A549 (cell line): ENCODE measurements at regions of chr5 and their contacts with region 1.

Region 1: DNA sequence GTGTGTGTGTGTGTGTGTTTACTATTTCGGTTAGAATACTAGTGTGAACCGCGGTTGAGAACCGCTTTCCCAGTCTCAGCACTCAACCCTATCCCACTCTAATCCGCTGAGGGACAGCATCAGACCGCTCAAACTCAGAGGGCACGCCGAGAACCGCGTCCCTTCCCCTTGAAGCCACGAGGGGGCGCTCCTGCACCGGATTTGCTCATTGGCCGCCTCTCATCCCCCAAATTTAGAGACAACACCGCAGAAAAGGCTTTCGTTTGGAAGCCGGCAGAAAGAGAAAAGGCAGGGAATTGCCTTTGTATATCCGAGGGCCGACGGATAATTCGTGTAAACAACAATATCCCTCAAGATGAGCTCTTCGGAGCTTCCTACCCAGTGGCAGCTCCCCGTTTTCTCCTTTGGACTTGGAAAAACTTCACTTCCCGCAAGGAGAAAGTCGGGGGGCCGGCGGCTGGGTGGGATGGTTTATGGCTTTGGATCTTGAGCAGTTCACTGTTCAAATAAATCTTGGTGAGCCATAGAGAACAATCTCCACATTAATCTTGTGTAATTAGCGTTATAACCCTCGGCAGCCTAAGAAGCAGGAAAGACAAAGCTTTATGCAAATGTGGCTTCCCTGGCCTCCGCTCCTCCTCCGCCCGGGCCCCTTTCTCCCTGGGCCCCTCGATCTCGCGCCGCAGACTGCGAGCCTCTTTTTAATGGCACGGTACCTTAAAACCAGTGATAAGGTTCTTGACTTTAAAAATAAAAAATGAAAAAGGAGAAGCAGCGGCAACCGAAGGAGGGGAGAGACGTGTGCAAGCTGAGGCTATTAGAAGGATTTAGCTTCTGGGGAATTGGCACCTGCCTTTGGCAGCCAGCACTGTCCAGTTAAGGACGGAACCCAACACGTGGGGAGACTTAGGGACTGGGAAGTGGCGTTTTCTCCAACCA is 296.8 kb downstream of the PARP8 start:
- DNase-seq: peak; percentile 55 to 65
- ATAC-seq: peak; percentile 92 to 96
- H3K4me3 ChIP-seq: peak overlapping the region; percentile 39; the same call in 2 of the 3 replicates
- H3K27ac ChIP-seq: no peak overlapping the region
- H3K4me1 ChIP-seq: no peaks in the 10 kb centered on the region
- CTCF ChIP-seq: peak; percentile 81
- EP300 ChIP-seq: no peak
- POLR2A ChIP-seq: no peak
- RAD21 ChIP-seq: peak; percentile 86 to 87

Region 2: DNA sequence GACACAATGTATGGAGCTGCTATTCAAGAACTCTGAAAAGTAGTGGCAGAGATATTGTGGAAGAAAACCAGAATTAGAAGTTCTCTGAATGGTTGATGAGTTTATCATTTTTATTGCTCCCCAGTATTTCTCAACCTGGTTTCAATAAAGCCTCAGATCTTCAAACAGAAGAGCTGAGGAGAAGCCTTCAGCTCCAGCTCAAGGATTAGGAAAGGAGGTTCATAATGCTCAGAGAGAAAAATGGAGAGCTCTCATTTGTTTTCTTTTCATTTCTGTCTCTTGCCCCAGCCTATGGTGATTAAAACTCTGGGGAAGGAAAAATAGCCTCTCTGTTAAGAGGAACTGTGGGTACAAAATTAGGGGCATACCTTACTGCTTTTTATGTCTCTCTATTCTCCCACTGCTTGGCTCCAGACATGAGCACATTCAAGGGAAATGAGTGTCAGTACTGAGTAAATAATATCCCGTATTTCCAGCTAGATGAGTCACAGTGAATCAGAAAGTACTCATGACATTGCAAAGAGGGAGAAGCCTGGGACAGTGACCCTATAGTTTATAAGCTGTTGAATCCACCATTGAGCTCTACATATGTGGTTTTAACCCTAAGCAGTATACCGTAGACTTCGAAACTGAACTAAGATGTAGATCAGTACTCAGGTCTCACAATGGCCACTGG is 660.2 kb before region 1 on chr5:
- CTCF ChIA-PET with region 1: no interaction called
- POLR2A ChIA-PET with region 1: no interaction called
- DNase-seq: peak; percentile 15 to 74
- ATAC-seq: peak; percentile 97 to 99
- H3K4me3 ChIP-seq: no peak overlapping the region
- H3K27ac ChIP-seq: peak overlapping the region; percentile 62 to 73
- H3K4me1 ChIP-seq: peaks cover 23% of the 10 kb centered on the region
- CTCF ChIP-seq: no peak
- EP300 ChIP-seq: no peak
- POLR2A ChIP-seq: no peak
- RAD21 ChIP-seq: no peak

Region 3: DNA sequence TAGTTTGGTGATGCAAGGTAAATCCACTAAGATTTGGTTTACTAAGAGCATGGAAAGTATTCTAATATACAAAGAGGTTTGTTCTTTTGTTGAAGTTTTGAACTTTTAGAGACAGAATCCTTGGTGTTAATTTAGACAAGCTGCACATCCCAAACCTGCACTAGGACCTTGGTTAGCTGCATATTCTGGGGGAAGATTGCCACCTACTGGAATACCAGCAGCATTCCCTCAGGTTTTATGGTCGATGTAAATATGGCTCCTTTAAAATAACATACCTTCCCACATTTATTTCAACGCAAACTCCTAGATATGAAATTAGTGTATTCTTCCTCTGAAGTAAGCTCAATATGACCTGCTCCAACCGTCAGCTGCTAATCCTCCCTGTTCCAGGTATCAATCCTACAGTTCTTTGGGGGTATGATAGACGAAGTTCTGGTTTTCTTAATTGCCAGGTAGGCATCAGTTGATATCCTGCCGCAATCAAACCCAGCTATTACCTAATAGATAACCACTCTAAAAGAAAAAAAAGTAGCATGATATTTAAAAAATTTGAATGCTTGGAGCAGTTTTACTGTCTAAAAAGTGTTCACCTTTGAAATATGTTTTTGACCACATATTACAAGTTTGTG is 1044.1 kb after region 1 on chr5:
- CTCF ChIA-PET with region 1: interaction called, 12 read pairs
- POLR2A ChIA-PET with region 1: no interaction called
- DNase-seq: peak; percentile 1 to 53
- ATAC-seq: peak; percentile 54 to 76; a peak in 3 of 6 replicates
- H3K4me3 ChIP-seq: no peak overlapping the region
- H3K27ac ChIP-seq: no peak overlapping the region
- H3K4me1 ChIP-seq: no peaks in the 10 kb centered on the region
- CTCF ChIP-seq: peak; percentile 57
- EP300 ChIP-seq: no peak
- POLR2A ChIP-seq: no peak
- RAD21 ChIP-seq: peak; percentile 66 to 71

Region 4: DNA sequence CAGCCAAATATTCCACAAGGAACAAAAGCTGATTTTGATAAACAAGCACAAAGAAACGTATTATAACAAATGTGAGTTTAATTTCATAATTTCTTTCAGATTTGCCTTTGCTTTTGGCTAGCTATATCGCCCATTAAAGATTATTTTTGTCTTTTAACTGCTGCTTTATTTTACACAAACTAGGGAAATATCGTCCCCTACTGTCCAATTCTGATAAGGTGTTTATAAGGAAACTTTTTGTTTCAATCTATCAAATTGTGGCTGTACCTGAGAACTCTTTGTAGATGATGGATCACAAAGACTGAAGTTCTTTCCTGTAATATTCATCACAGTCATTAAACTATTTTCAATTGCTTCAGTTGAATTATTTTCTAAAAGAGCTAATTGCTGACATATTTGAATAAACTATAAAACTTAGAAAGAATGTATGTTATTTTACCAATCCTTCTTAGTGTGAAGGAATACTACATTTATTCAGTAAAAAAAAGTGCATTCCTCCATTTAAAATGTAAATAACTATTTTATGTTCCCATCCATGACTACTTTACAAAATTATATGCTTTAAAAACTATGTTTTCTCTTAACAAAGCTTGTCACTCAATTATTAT is 1393.2 kb after region 1 on chr5:
- CTCF ChIA-PET with region 1: interaction called, 13 read pairs
- POLR2A ChIA-PET with region 1: no interaction called
- DNase-seq: peak in 1 of 2 experiments; percentile 12
- ATAC-seq: no peak
- H3K4me3 ChIP-seq: no peak overlapping the region
- H3K27ac ChIP-seq: no peak overlapping the region
- H3K4me1 ChIP-seq: no peaks in the 10 kb centered on the region
- CTCF ChIP-seq: peak; percentile 50
- EP300 ChIP-seq: no peak
- POLR2A ChIP-seq: no peak
- RAD21 ChIP-seq: peak; percentile 53; a peak in 4 of 5 replicates

Region 5: DNA sequence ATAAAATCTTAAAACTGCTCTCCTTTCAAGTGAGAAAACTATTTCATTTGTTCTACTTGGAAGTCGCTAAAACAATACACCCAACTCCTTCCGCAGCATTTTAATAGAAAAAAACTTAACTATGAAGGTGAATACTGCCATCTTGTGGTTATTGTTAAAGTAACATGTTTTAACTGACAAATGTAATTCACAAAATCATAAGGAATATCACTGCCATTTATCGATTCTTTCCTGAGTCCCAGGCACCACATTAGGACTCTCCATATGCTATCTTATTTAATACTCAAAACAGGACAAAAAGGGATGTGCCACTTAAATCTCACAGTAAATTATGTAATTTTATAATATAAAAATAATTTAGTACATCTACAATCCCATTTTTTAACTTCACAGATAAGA is 1694.0 kb after region 1 on chr5:
- CTCF ChIA-PET with region 1: interaction called, 22 read pairs
- POLR2A ChIA-PET with region 1: no interaction called
- DNase-seq: peak; percentile 8 to 48
- ATAC-seq: no peak
- H3K4me3 ChIP-seq: no peak overlapping the region
- H3K27ac ChIP-seq: no peak overlapping the region
- H3K4me1 ChIP-seq: no peaks in the 10 kb centered on the region
- CTCF ChIP-seq: peak; percentile 60
- EP300 ChIP-seq: no peak
- POLR2A ChIP-seq: no peak
- RAD21 ChIP-seq: peak; percentile 60 to 69